HepG2 (cell line): ENCODE measurements at regions of chr11 and their contacts with region 1.

Region 1: GRCh38 chr11:73335204-73335923 is 27.3 kb downstream of the ARHGEF17 start:
- DNase-seq: peak; percentile 68
- ATAC-seq: peak; percentile 42
- H3K4me3 ChIP-seq: no peak overlapping the region
- H3K27ac ChIP-seq: peak overlapping the region; percentile 40
- H3K4me1 ChIP-seq: peaks cover 55% of the 10 kb centered on the region
- H3K27me3 ChIP-seq: no peaks in the 10 kb centered on the region
- CTCF ChIP-seq: peak; percentile 88
- EP300 ChIP-seq: no peak
- POLR2A ChIP-seq: no peak
- RAD21 ChIP-seq: peak; percentile 88

Region 2: DNA sequence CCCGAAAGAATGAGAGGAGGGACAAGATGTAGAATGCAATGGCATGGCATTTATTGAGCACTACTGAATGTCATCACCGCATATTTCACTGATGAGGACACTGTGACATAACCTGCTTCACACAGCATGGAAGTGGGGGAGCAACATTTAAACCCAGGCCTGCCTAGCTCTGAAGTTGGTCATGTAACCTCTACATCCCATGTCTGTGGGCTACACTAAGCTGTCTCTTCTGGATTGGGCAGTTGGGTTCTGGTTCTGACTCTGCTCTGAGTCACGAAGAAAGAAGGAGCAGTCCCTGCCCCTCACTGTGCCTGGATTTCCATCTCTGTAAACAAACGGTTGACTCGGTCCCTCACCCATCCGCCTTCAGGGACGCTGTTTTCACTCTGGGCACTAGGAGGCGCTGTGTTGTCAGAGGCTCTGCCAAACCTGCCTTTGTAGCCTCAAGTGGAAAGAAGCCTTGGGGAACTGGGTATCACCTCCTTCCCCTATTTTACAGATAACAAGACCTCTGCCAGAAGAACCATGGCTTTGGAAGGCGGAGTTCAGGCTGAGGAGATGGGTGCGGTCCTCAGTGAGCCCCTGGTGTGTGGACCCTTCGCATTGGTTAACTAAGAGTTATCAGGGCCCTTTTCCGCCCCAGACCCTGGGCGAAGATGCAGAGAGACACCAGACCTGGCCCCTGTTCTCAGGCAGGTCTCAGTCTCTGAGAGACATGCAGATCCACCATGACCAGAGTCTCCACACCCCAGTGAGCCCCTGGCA is 40.0 kb before region 1 on chr11:
- CTCF ChIA-PET with region 1: interaction called, 40 read pairs
- POLR2A ChIA-PET with region 1: no interaction called
- in situ Hi-C with region 1: no loop called
- intact Hi-C with region 1: no loop called
- DNase-seq: peak; percentile 57
- ATAC-seq: peak; percentile 67
- H3K4me3 ChIP-seq: no peak overlapping the region
- H3K27ac ChIP-seq: no peak overlapping the region
- H3K4me1 ChIP-seq: no peaks in the 10 kb centered on the region
- H3K27me3 ChIP-seq: peaks cover 8 to 35% of the 10 kb centered on the region in 2 experiments; a peak in 3 of 5 replicates
- CTCF ChIP-seq: peak; percentile 93
- EP300 ChIP-seq: no peak
- POLR2A ChIP-seq: no peak
- RAD21 ChIP-seq: peak; percentile 60; the same call in 1 of the 2 replicates

Region 3: GRCh38 chr11:73307323-73308002 is 27.9 kb before region 1 on chr11:
- CTCF ChIA-PET with region 1: interaction called, 90 read pairs
- POLR2A ChIA-PET with region 1: interaction called, 205 read pairs
- in situ Hi-C with region 1: loop called (anchors 5 kb)
- intact Hi-C with region 1: loop called (anchors 1 kb)
- DNase-seq: peak; percentile 95
- ATAC-seq: peak; percentile 70
- H3K4me3 ChIP-seq: peak overlapping the region; percentile 82 to 86 (median 85)
- H3K27ac ChIP-seq: peak overlapping the region; percentile 99
- H3K4me1 ChIP-seq: peaks cover 44% of the 10 kb centered on the region
- H3K27me3 ChIP-seq: peaks cover 0 to 4% of the 10 kb centered on the region in 2 experiments; a peak in 2 of 5 replicates
- CTCF ChIP-seq: peak; percentile 96
- EP300 ChIP-seq: peak in 1 of 2 experiments; percentile 30; a peak in 1 of 4 replicates
- POLR2A ChIP-seq: peak in 1 of 2 experiments; percentile 91; a peak in 2 of 4 replicates
- RAD21 ChIP-seq: peak; percentile 95

Region 4: GRCh38 chr11:73314117-73314961 is 21.0 kb before region 1 on chr11:
- CTCF ChIA-PET with region 1: interaction called, 3 read pairs
- POLR2A ChIA-PET with region 1: interaction called, 205 read pairs
- in situ Hi-C with region 1: loop called (anchors 5 kb)
- intact Hi-C with region 1: no loop called
- DNase-seq: peak; percentile 95
- ATAC-seq: peak; percentile 89
- H3K4me3 ChIP-seq: peak overlapping the region in 1 of 3 experiments; percentile 55; a peak in 1 of 6 replicates
- H3K27ac ChIP-seq: peak overlapping the region; percentile 59
- H3K4me1 ChIP-seq: peaks cover 95% of the 10 kb centered on the region
- H3K27me3 ChIP-seq: no peaks in the 10 kb centered on the region
- CTCF ChIP-seq: peak; percentile 40
- EP300 ChIP-seq: peak in 1 of 2 experiments; percentile 48; a peak in 1 of 4 replicates
- POLR2A ChIP-seq: 0 out of 4 replicates have a peak, but pooled peaks of 1 of the 2 experiments have one; percentile 37
- RAD21 ChIP-seq: no peak; the same call in none of the 2 replicates

Region 5: GRCh38 chr11:73325036-73325981 is 10.1 kb before region 1 on chr11:
- CTCF ChIA-PET with region 1: no interaction called
- POLR2A ChIA-PET with region 1: interaction called, 10 read pairs
- in situ Hi-C with region 1: no loop called
- intact Hi-C with region 1: no loop called
- DNase-seq: peak; percentile 66
- ATAC-seq: peak; percentile 48
- H3K4me3 ChIP-seq: no peak overlapping the region
- H3K27ac ChIP-seq: peak overlapping the region; percentile 52
- H3K4me1 ChIP-seq: peaks cover 95% of the 10 kb centered on the region
- H3K27me3 ChIP-seq: no peaks in the 10 kb centered on the region
- CTCF ChIP-seq: no peak
- EP300 ChIP-seq: no peak
- POLR2A ChIP-seq: peak in 1 of 2 experiments; percentile 31; a peak in 1 of 4 replicates
- RAD21 ChIP-seq: no peak